Colonic mucosa (tissue), 4 donors: ENCODE measurements at regions of chr2 and their contacts with region 1.

Region 1: GRCh38 chr2:130332271-130333073 is 10.2 kb upstream of the IMP4 start:
- DNase-seq: peak; percentile 76
- H3K4me3 ChIP-seq: no peak overlapping the region
- H3K27ac ChIP-seq: no peak overlapping the region
- H3K4me1 ChIP-seq: no peaks in the 10 kb centered on the region
- H3K27me3 ChIP-seq: peaks cover 3% of the 10 kb centered on the region
- CTCF ChIP-seq: peak; percentile 91

Region 2: GRCh38 chr2:129936334-129936934 is 396.0 kb before region 1 on chr2:
- intact Hi-C with region 1: loop called (anchors 5 kb)
- DNase-seq: no peak
- H3K4me3 ChIP-seq: no peak overlapping the region
- H3K27ac ChIP-seq: no peak overlapping the region
- H3K4me1 ChIP-seq: no peaks in the 10 kb centered on the region
- H3K27me3 ChIP-seq: peaks cover 7% of the 10 kb centered on the region
- CTCF ChIP-seq: peak; percentile 18

Region 3: GRCh38 chr2:130154773-130155765 is 177.4 kb before region 1 on chr2:
- intact Hi-C with region 1: loop called (anchors 5 kb)
- DNase-seq: no peak
- H3K4me3 ChIP-seq: no peak overlapping the region
- H3K27ac ChIP-seq: no peak overlapping the region
- H3K4me1 ChIP-seq: no peaks in the 10 kb centered on the region
- H3K27me3 ChIP-seq: no peaks in the 10 kb centered on the region
- CTCF ChIP-seq: no peak

Region 4: DNA sequence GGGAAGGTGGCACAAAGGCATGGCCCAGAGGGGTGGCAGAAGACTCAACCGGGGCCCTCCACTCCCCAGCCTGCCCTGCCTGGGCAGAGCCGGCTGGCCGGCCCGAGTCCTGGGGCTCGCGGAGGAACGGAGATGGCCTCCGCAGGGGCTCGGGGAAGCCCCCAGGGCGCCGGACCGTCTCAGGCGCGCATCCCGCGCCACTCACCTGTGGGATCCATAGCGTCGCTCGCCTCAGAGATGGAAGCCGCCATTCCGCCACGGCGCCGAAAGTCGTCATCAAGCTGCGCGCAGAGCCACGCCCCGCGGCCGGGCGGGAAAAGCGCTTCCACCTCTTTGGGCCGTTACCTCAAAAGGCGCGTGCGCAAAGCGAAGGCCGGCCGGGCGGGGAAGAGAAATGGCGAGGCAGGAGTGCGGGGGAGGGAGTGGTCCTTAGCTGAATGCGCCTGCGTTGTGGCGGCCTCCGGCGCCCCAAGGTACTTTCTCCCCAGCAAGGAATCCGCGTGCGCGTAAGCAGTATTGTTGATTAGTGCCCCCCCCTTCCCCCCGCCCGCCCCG is 151.1 kb before region 1 on chr2 and contains the start of gene SMPD4:
- intact Hi-C with region 1: loop called (anchors 5 kb)
- DNase-seq: peak; percentile 98
- H3K4me3 ChIP-seq: peak within 1 kb of the TSS; percentile 80
- H3K27ac ChIP-seq: peak within 1 kb of the TSS; percentile 97
- H3K4me1 ChIP-seq: no peaks in the 10 kb centered on the region
- H3K27me3 ChIP-seq: no peaks in the 10 kb centered on the region
- CTCF ChIP-seq: no peak
- total RNA-seq, gene SMPD4: 32.4 to 73.0 TPM

Region 5: GRCh38 chr2:130288461-130289403 is 43.7 kb before region 1 on chr2:
- intact Hi-C with region 1: no loop called
- DNase-seq: no peak
- H3K4me3 ChIP-seq: no peak overlapping the region
- H3K27ac ChIP-seq: no peak overlapping the region
- H3K4me1 ChIP-seq: no peaks in the 10 kb centered on the region
- H3K27me3 ChIP-seq: no peaks in the 10 kb centered on the region
- CTCF ChIP-seq: no peak

Region 6: GRCh38 chr2:130303169-130303568 is 29.3 kb before region 1 on chr2:
- intact Hi-C with region 1: no loop called
- DNase-seq: no peak
- H3K4me3 ChIP-seq: no peak overlapping the region
- H3K27ac ChIP-seq: no peak overlapping the region
- H3K4me1 ChIP-seq: no peaks in the 10 kb centered on the region
- H3K27me3 ChIP-seq: no peaks in the 10 kb centered on the region
- CTCF ChIP-seq: no peak

Region 7: GRCh38 chr2:130798472-130799218 is 466.2 kb after region 1 on chr2:
- intact Hi-C with region 1: no loop called
- DNase-seq: no peak
- H3K4me3 ChIP-seq: peak overlapping the region; percentile 98
- H3K27ac ChIP-seq: no peak overlapping the region
- H3K4me1 ChIP-seq: no peaks in the 10 kb centered on the region
- H3K27me3 ChIP-seq: no peaks in the 10 kb centered on the region
- CTCF ChIP-seq: no peak